ENCODE measurements at regions of chr3 and their contacts with region 1.

Region 1: GRCh38 chr3:157081681-157082210 is 78.2 kb downstream of the CCNL1 start:
- DNase-seq: peak; percentile 87 to 93 (median 93)
- H3K4me3 ChIP-seq: no peak overlapping the region
- H3K27ac ChIP-seq: no peak overlapping the region
- H3K4me1 ChIP-seq: peaks cover 3% of the 10 kb centered on the region
- H3K27me3 ChIP-seq: no peaks in the 10 kb centered on the region
- CTCF ChIP-seq: peak; percentile 77 to 97 (median 96)
- EP300 ChIP-seq: no peak
- POLR2A ChIP-seq: no peak

Region 2: GRCh38 chr3:156535162-156535627 is 546.6 kb before region 1 on chr3:
- intact Hi-C with region 1: loop called in 1 of 4 experiments (anchors 10 kb)
- DNase-seq: peak; percentile 51 to 71 (median 60)
- H3K4me3 ChIP-seq: no peak overlapping the region
- H3K27ac ChIP-seq: peak overlapping the region in 1 of 2 donors; percentile 17
- H3K4me1 ChIP-seq: peaks cover 2% of the 10 kb centered on the region
- H3K27me3 ChIP-seq: no peaks in the 10 kb centered on the region
- CTCF ChIP-seq: peak in 2 of 3 donors; percentile 12 to 38
- EP300 ChIP-seq: peak; percentile 20
- POLR2A ChIP-seq: no peak

Region 3: GRCh38 chr3:156685198-156685597 is 396.5 kb before region 1 on chr3:
- intact Hi-C with region 1: loop called in 1 of 4 experiments (anchors 5 kb)
- DNase-seq: no peak
- H3K4me3 ChIP-seq: no peak overlapping the region
- H3K27ac ChIP-seq: no peak overlapping the region
- H3K4me1 ChIP-seq: peaks cover 9% of the 10 kb centered on the region
- H3K27me3 ChIP-seq: no peaks in the 10 kb centered on the region
- CTCF ChIP-seq: no peak
- EP300 ChIP-seq: no peak
- POLR2A ChIP-seq: no peak

Region 4: GRCh38 chr3:156826144-156826895 is 255.4 kb before region 1 on chr3 and contains the start of gene LEKR1:
- intact Hi-C with region 1: loop called in 2 of 4 experiments (anchors 5 to 10 kb)
- DNase-seq: peak; percentile 84 to 93 (median 88)
- H3K4me3 ChIP-seq: peak within 1 kb of the TSS; percentile 67
- H3K27ac ChIP-seq: peak within 1 kb of the TSS; percentile 75 to 83
- H3K4me1 ChIP-seq: no peaks in the 10 kb centered on the region
- H3K27me3 ChIP-seq: no peaks in the 10 kb centered on the region
- CTCF ChIP-seq: peak in 2 of 3 donors; percentile 8 to 16
- EP300 ChIP-seq: peak; percentile 3
- POLR2A ChIP-seq: peak; percentile 76
- total RNA-seq, gene LEKR1: 1.5 to 7.8 (median 2.6) TPM